Caco-2 (cell line): ENCODE measurements at regions of chr3 and their contacts with region 1.

Region 1: GRCh38 chr3:98188545-98188944 is 22.0 kb downstream of the OR5H15 start:
- DNase-seq: no peak
- H3K4me3 ChIP-seq: no peak overlapping the region
- H3K4me3 Mint-ChIP-seq: no peak overlapping the region
- H3K27ac Mint-ChIP-seq: no peak overlapping the region
- H3K4me1 ChIP-seq: no peaks in the 10 kb centered on the region
- H3K4me1 Mint-ChIP-seq: no peaks in the 10 kb centered on the region
- H3K27me3 ChIP-seq: no peaks in the 10 kb centered on the region
- H3K27me3 Mint-ChIP-seq: peaks cover 3% of the 10 kb centered on the region
- CTCF ChIP-seq: peak in 1 of 2 experiments; percentile 39

Region 2: GRCh38 chr3:98140531-98140930 is 48.0 kb before region 1 on chr3:
- CTCF ChIA-PET with region 1: no interaction called
- POLR2A ChIA-PET with region 1: no interaction called
- intact Hi-C with region 1: loop called (anchors 1 kb)
- DNase-seq: no peak
- H3K4me3 ChIP-seq: no peak overlapping the region
- H3K4me3 Mint-ChIP-seq: no peak overlapping the region
- H3K27ac Mint-ChIP-seq: no peak overlapping the region
- H3K4me1 ChIP-seq: no peaks in the 10 kb centered on the region
- H3K4me1 Mint-ChIP-seq: no peaks in the 10 kb centered on the region
- H3K27me3 ChIP-seq: no peaks in the 10 kb centered on the region
- H3K27me3 Mint-ChIP-seq: no peaks in the 10 kb centered on the region
- CTCF ChIP-seq: no peak

Region 3: GRCh38 chr3:98329392-98330124 is 141.0 kb after region 1 on chr3:
- CTCF ChIA-PET with region 1: interaction called, 4 read pairs
- POLR2A ChIA-PET with region 1: no interaction called
- intact Hi-C with region 1: loop called (anchors 1 kb)
- DNase-seq: peak; percentile 38 to 56
- H3K4me3 ChIP-seq: no peak overlapping the region
- H3K4me3 Mint-ChIP-seq: no peak overlapping the region
- H3K27ac Mint-ChIP-seq: no peak overlapping the region
- H3K4me1 ChIP-seq: no peaks in the 10 kb centered on the region
- H3K4me1 Mint-ChIP-seq: peaks cover 13% of the 10 kb centered on the region
- H3K27me3 ChIP-seq: no peaks in the 10 kb centered on the region
- H3K27me3 Mint-ChIP-seq: peaks cover 3% of the 10 kb centered on the region
- CTCF ChIP-seq: peak; percentile 63 to 69